ENCODE measurements at regions of chr9 and their contacts with region 1.

Region 1: GRCh38 chr9:124291801-124292396 is 34.1 kb downstream of the NEK6 start:
- DNase-seq: peak; percentile 53 to 87 (median 85)
- H3K4me3 ChIP-seq: peak overlapping the region in 5 of 7 experiments; percentile 1 to 66 (median 25)
- H3K27ac ChIP-seq: no peak overlapping the region
- H3K4me1 ChIP-seq: peaks cover 6 to 100% (median 93%) of the 10 kb centered on the region in 4 experiments
- H3K27me3 ChIP-seq: no peaks in the 10 kb centered on the region

Region 2: DNA sequence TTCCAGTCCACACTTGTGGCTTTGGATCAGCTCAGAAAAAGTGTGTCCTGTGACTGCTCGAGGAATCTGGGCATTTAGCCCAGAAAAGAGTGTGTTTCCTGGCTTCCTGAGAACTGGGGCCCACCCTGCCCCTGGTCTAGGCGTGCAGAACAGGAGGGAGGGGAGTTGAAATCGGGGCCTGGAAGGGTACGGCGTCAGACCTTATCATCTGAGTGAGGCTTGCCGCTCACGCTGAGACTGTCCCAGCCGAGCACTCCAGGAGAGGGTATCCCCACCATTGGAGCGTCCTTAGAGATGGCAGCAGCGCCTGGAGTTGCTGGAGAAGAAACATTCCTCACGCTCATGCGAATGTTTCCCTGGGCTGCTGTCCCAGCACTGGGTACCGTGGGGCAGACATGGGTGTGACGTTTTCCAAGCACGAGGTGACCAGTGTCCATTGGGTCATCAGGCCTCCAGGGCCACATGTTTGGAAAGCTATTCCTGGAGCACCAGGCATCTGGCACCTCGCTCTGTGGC is 11.7 kb before region 1 on chr9:
- CTCF ChIA-PET with region 1: interaction called, 12 read pairs
- POLR2A ChIA-PET with region 1: no interaction called
- DNase-seq: peak; percentile 53 to 87 (median 83)
- H3K4me3 ChIP-seq: peak overlapping the region in 1 of 7 experiments; percentile 32
- H3K27ac ChIP-seq: peak overlapping the region; percentile 11 to 60
- H3K4me1 ChIP-seq: peaks cover 2 to 96% (median 72%) of the 10 kb centered on the region in 4 experiments
- H3K27me3 ChIP-seq: no peaks in the 10 kb centered on the region